Right ventricle myocardium inferior (tissue), 1 donor: ENCODE measurements at regions of chr1 and their contacts with region 1.

Region 1: GRCh38 chr1:225999227-225999911 is at the start of gene SDE2:
- DNase-seq: peak; percentile 100
- ATAC-seq: peak; percentile 99
- total RNA-seq, gene SDE2: 11.7 TPM

Region 2: DNA sequence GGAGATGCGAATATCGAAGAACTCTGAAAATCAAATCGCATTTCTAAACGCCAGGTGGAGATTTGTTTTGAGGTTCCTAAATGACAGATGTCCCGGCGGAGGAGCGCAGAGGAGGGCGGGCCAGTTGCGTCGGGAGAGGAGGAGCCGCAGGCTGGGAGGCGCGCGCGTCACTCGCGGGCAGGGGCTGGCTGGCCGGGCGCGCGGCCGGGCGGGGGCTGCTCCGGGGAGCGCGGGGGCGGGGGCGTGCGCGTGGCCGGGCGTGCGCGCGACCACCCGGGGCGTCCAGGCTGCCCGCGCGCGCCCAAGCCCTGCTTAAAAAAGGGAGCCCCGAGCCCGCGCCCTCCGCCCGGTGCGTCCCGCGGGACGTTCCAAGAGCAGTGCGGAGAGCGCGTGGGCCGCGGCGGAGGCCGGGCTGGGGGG is 110.5 kb after region 1 on chr1:
- intact Hi-C with region 1: loop called (anchors 2 kb)
- DNase-seq: peak; percentile 95
- ATAC-seq: peak; percentile 91

Region 3: GRCh38 chr1:226149806-226150205 is 150.4 kb after region 1 on chr1:
- intact Hi-C with region 1: no loop called
- DNase-seq: no peak
- ATAC-seq: no peak

Region 4: DNA sequence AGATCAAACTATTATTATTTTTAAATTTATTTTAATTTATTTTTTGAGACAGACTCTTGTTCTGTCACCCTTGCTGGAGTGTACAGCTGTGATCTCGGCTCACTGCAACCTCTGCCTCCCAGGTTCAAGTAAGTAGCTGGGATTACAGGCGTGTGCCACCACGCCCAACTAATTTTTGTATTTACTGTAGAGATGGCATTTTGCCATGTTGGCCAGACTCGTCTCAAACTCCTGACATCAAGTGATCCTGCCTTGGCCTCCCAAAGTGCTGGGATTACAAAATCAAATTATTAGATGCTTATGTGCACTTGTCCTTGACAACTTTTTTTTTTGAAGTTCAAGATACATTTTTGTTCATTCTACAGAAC is 294.2 kb after region 1 on chr1:
- intact Hi-C with region 1: no loop called
- DNase-seq: no peak
- ATAC-seq: no peak